IMR-90 (cell line): ENCODE measurements at regions of chrX and their contacts with region 1.

Region 1: GRCh38 chrX:14039344-14039743 is 9.7 kb upstream of the GEMIN8 start:
- DNase-seq: peak; percentile 37
- ATAC-seq: peak; percentile 70
- H3K4me3 ChIP-seq: no peak overlapping the region
- H3K27ac ChIP-seq: no peak overlapping the region
- H3K4me1 ChIP-seq: no peaks in the 10 kb centered on the region
- H3K27me3 ChIP-seq: peaks cover 7% of the 10 kb centered on the region
- CTCF ChIP-seq: peak; percentile 76
- POLR2A ChIP-seq: no peak
- RAD21 ChIP-seq: peak; percentile 76

Region 2: GRCh38 chrX:14528629-14529289 is 489.4 kb after region 1 on chrX:
- CTCF ChIA-PET with region 1: interaction called, 8 read pairs
- POLR2A ChIA-PET with region 1: no interaction called
- dilution Hi-C with region 1: no loop called
- in situ Hi-C with region 1: no loop called
- intact Hi-C with region 1: loop called (anchors 2 kb)
- DNase-seq: peak; percentile 5
- ATAC-seq: no peak
- H3K4me3 ChIP-seq: no peak overlapping the region
- H3K27ac ChIP-seq: no peak overlapping the region
- H3K4me1 ChIP-seq: no peaks in the 10 kb centered on the region
- H3K27me3 ChIP-seq: no peaks in the 10 kb centered on the region
- CTCF ChIP-seq: peak; percentile 32; the same call in 1 of the 2 replicates
- POLR2A ChIP-seq: no peak
- RAD21 ChIP-seq: 0 out of 2 replicates have a peak, but pooled peaks have one; percentile 19

Region 3: DNA sequence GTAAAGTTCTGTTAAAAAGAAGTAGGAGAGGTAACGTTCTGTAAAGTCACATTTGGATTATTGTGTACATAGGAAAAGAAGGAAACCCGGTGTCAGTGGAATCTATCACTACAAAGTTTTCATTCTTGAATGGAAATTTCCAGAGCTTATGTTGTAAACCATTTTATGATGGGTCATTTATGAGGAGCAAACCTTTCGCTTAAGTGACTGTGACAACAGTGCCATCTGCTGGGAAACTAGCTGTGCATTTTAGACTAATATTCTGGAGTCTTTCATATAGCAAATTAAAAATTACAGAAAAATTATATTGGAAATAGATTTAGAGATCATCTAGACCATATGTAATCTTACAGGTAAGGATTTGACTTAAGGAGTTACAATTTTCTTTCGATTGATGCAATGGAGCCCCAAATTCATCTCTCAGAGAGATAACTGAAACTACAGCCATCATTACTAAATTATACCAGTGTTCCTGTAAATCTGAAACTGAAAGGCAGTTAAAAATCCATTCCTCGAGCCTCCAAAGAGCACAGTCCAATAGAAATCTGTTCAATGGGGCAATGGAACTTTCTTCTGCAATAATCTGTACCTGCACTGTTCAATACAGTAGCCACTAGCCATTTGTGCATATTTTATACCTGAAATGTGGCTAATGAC is 1203.7 kb after region 1 on chrX:
- CTCF ChIA-PET with region 1: no interaction called
- POLR2A ChIA-PET with region 1: no interaction called
- dilution Hi-C with region 1: no loop called
- in situ Hi-C with region 1: loop called (anchors 10 kb)
- intact Hi-C with region 1: loop called (anchors 1 kb)
- DNase-seq: peak; percentile 59
- ATAC-seq: peak; percentile 62; the same call in 1 of the 2 replicates
- H3K4me3 ChIP-seq: no peak overlapping the region
- H3K27ac ChIP-seq: no peak overlapping the region
- H3K4me1 ChIP-seq: no peaks in the 10 kb centered on the region
- H3K27me3 ChIP-seq: peaks cover 2% of the 10 kb centered on the region
- CTCF ChIP-seq: peak; percentile 62
- POLR2A ChIP-seq: no peak
- RAD21 ChIP-seq: peak; percentile 62